ENCODE measurements at regions of chr1 and their contacts with region 1.

Region 1: DNA sequence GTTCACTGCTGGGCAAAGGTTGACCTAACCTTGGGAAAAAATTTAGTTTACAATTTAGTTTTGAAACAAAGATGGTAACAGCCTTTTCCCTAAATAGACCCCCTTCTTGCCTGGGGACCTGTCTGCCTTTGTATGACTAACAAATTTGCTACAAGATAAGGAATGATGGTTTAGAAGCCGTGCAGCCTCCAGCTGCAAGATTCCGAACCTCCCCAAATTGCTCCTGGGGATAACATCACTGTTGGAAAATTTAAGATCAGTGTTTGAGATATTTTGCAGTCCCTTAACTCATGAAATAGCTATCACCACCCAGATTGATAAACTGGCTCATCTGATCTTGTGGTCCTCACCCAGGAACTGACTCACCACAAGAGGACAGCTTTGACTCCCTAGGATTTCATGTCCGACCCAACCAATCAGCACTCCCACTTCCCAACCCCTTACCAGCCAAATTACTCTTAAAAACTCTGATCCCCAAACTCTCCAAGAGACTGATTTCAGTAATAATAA is 254.7 kb downstream of the USH2A start:
- DNase-seq: no peak
- H3K4me3 ChIP-seq: no peak overlapping the region
- H3K27ac ChIP-seq: no peak overlapping the region
- H3K4me1 ChIP-seq: no peaks in the 10 kb centered on the region
- H3K27me3 ChIP-seq: no peaks in the 10 kb centered on the region
- CTCF ChIP-seq: no peak
- EP300 ChIP-seq: no peak
- POLR2A ChIP-seq: no peak

Region 2: DNA sequence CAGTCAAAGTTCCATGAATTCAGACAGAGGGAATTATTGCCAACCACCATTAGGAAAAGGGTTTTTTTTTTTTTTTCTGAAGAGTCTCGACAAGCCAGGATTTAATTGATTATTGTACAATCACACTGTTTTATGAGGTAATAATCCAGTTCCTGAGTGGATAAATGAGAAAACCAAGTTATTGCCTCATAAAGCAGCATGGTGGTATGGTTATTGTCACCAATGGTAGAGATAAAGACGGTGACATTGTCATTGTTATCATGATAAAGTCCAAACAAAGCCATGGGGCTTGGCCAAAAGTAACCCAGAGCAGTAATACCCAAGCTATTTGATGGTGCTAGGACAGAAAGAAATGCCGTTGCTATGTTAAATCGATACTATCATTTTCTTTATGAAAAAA is 21.9 kb after region 1 on chr1:
- in situ Hi-C with region 1: no loop called
- intact Hi-C with region 1: loop called (anchors 2 kb)
- DNase-seq: no peak
- H3K4me3 ChIP-seq: no peak overlapping the region
- H3K27ac ChIP-seq: no peak overlapping the region
- H3K4me1 ChIP-seq: no peaks in the 10 kb centered on the region
- H3K27me3 ChIP-seq: no peaks in the 10 kb centered on the region
- CTCF ChIP-seq: no peak
- EP300 ChIP-seq: no peak
- POLR2A ChIP-seq: no peak

Measured in transverse colon (tissue), 4 donors.